ENCODE measurements at regions of chr15 and their contacts with region 1.

Region 1: DNA sequence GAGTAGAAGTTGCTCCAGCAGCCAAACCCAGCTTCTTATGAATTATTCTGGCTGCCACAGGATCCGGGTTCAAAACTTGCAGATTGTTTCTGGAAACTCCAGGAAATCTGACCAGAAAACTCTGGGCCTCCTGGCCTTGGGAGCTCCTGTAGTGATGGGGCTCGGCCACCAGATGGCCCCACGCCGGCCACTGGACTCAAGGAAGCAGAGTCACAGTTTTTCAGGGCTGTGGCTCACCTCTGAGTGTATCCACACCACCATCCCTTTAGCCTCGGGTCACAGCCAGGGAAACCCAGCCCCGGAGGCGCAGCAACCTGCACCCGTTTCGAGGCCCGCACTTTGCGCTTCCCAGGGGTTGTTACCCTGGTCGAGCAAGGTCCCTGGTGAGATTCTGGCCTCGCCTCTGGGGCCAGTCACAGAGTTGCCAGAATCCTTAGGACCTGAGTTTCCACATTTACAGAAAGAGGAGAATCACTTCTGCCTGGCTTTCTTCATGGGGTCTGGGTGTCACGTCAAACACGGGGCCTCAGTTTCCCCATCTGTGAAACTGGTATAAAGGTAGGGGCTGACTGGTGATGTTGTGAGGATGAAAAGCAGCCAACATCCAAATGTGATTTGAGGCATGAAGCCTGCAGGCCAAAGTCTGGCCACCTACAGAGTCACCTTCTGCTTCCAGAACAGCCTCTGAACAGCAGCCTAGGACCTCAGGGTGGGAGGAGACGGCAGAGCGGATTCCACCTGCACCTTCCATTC is 53.5 kb upstream of the LCTL start:
- DNase-seq: peak; percentile 44 to 91
- H3K4me3 ChIP-seq: no peak overlapping the region
- H3K27ac ChIP-seq: no peak overlapping the region
- H3K4me1 ChIP-seq: peaks cover 18 to 31% (median 24%) of the 10 kb centered on the region in 4 experiments
- H3K27me3 ChIP-seq: peaks cover 0 to 5% (median 1%) of the 10 kb centered on the region in 4 experiments; a peak in 4 of 7 replicates
- CTCF ChIP-seq: peak; percentile 82 to 89 (median 88)
- EP300 ChIP-seq: no peak
- POLR2A ChIP-seq: no peak
- RAD21 ChIP-seq: peak; percentile 82 to 86

Region 2: GRCh38 chr15:66603301-66604179 is 15.8 kb before region 1 on chr15:
- CTCF ChIA-PET with region 1: interaction called, 85 read pairs
- POLR2A ChIA-PET with region 1: interaction called, 3 read pairs
- DNase-seq: peak; percentile 67 to 91
- H3K4me3 ChIP-seq: no peak overlapping the region
- H3K27ac ChIP-seq: no peak overlapping the region
- H3K4me1 ChIP-seq: no peaks in the 10 kb centered on the region
- H3K27me3 ChIP-seq: no peaks in the 10 kb centered on the region
- CTCF ChIP-seq: peak; percentile 83 to 94 (median 83)
- EP300 ChIP-seq: no peak
- POLR2A ChIP-seq: no peak
- RAD21 ChIP-seq: peak; percentile 94 to 95

Region 3: GRCh38 chr15:66673410-66674322 is 54.3 kb after region 1 on chr15:
- CTCF ChIA-PET with region 1: interaction called, 17 read pairs
- POLR2A ChIA-PET with region 1: interaction called, 11 read pairs
- DNase-seq: peak; percentile 43 to 96
- H3K4me3 ChIP-seq: no peak overlapping the region
- H3K27ac ChIP-seq: peak overlapping the region; percentile 36; the same call in 1 of the 2 replicates
- H3K4me1 ChIP-seq: peaks cover 7 to 19% (median 13%) of the 10 kb centered on the region in 4 experiments
- H3K27me3 ChIP-seq: no peaks in the 10 kb centered on the region
- CTCF ChIP-seq: no peak
- EP300 ChIP-seq: no peak
- POLR2A ChIP-seq: no peak
- RAD21 ChIP-seq: no peak

Region 4: GRCh38 chr15:66700802-66701421 is 81.6 kb after region 1 on chr15:
- CTCF ChIA-PET with region 1: interaction called, 361 read pairs
- POLR2A ChIA-PET with region 1: interaction called, 17 read pairs
- DNase-seq: peak; percentile 65 to 94
- H3K4me3 ChIP-seq: peak overlapping the region; percentile 54 to 83 (median 70)
- H3K27ac ChIP-seq: no peak overlapping the region
- H3K4me1 ChIP-seq: peaks cover 0 to 22% (median 9%) of the 10 kb centered on the region in 4 experiments; a peak in 6 of 7 replicates
- H3K27me3 ChIP-seq: peaks cover 18 to 45% (median 35%) of the 10 kb centered on the region in 4 experiments; a peak in 6 of 7 replicates
- CTCF ChIP-seq: no peak
- EP300 ChIP-seq: no peak
- POLR2A ChIP-seq: no peak
- RAD21 ChIP-seq: no peak